ENCODE measurements at regions of chr4 and their contacts with region 1.

Region 1: GRCh38 chr4:373062-373839 is 35.6 kb downstream of the ZNF141 start:
- DNase-seq: no peak

Region 2: DNA sequence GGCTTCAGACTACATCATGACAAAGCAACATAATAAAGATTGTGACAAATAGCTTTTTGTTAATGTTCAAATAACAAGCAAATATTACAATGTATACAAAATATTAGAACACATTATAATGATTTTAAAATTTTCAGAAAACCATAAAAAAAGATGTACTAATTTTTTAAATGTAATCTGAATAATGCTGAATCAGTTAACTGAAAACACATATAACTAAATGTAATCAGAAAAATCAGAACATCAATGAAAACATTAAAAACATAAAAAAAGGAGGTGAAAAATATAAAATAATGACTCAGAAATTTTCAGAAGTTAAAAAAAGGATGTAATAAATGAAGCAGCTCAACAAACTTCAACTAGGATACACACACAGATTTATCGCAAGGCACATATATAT is 72.2 kb after region 1 on chr4:
- intact Hi-C with region 1: loop called (anchors 10 kb)
- DNase-seq: no peak